ENCODE measurements at regions of chr9 and their contacts with region 1.

Region 1: DNA sequence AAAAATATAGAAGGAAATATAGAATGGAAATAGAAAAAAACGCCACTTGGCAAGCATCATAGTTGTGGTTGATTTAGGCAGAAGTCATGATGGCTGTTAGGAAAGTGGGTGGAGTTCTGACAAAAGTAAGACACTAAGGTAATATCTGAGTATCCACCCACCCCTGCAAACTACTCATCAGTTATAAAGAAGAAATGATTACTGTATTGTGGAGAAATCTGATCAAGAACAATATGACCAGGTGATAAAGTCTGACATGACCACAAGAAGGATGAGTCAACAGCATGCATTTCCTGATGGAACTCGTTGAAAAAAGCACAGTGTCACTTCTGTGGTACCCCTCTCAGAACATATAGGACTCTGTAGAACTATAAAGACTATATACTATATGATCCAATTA is 343.4 kb upstream of the PAPPA start:
- DNase-seq: no peak
- H3K4me3 ChIP-seq: no peak overlapping the region
- H3K27ac ChIP-seq: no peak overlapping the region
- H3K4me1 ChIP-seq: no peaks in the 10 kb centered on the region
- H3K27me3 ChIP-seq: no peaks in the 10 kb centered on the region
- CTCF ChIP-seq: no peak

Region 2: DNA sequence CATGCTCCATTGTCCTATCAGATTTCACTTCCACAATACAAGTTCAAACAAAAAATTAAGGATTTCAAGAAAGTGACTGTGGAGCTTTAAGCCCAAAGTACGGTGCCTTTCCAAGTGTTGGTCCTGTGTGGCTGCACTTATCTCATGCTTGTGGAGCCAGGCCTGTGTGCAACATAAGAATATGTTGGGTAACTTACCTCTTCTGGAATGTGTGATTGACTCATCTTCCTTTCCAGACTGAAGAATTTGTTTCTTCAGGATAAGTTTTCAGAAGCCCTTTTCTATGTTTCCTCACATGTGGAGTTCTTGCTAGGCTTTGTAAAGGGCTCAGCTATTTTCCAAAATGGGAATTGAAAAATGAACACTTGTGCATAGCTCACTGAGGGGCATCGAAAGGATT is 141.7 kb before region 1 on chr9:
- intact Hi-C with region 1: no loop called
- DNase-seq: peak in 1 of 2 donors; percentile 65
- H3K4me3 ChIP-seq: no peak overlapping the region
- H3K27ac ChIP-seq: peak overlapping the region; percentile 53 to 61
- H3K4me1 ChIP-seq: peaks cover 9 to 34% of the 10 kb centered on the region in 2 donors
- H3K27me3 ChIP-seq: no peaks in the 10 kb centered on the region
- CTCF ChIP-seq: no peak

Region 3: DNA sequence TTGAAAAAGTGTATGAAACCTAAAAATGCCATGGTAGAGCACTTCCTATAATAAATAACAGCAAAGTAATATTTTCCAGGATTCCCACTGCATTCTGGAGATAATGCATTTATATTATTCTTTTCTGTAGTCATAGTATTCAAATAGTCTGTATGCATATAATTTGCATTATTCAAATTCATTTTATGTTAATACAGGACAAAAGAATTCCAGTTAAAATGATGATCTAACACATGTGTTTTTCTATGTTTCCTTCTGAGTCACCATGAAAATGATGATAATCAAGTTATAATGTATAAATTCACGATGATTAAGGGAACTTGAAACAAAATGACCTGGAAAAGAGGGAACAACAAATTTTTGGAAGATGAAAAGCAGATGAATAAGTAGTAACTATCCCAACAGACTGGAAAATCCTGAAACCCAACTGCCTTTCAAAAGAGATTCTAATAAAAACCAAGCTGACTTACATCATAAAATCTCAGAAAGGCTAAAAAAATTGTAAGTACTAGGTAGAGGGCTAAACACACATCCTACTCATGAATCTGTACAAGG is 15.2 kb before region 1 on chr9:
- intact Hi-C with region 1: no loop called
- DNase-seq: no peak
- H3K4me3 ChIP-seq: no peak overlapping the region
- H3K27ac ChIP-seq: no peak overlapping the region
- H3K4me1 ChIP-seq: no peaks in the 10 kb centered on the region
- H3K27me3 ChIP-seq: no peaks in the 10 kb centered on the region
- CTCF ChIP-seq: no peak

Region 4: DNA sequence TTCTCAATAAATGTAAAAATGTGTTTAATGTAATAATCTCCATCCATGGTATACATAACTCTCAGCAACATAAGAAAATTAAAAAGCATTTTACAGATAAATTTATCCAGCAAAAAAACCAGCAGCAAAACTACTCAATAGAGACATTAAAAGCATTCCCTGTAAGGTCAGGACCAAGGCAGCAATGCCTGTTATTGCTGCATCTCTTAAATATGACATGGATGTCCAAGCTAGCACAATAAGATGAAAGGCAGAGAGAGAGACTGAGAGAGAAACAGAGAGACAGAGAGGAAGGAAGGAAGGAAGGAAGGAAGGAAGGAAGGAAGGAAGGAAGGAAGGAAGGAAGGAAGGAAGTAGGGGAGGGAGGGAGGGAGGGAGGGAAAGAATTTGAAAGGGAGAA is 54.4 kb after region 1 on chr9:
- intact Hi-C with region 1: no loop called
- DNase-seq: no peak
- H3K4me3 ChIP-seq: no peak overlapping the region
- H3K27ac ChIP-seq: no peak overlapping the region
- H3K4me1 ChIP-seq: no peaks in the 10 kb centered on the region
- H3K27me3 ChIP-seq: no peaks in the 10 kb centered on the region
- CTCF ChIP-seq: no peak

Region 5: DNA sequence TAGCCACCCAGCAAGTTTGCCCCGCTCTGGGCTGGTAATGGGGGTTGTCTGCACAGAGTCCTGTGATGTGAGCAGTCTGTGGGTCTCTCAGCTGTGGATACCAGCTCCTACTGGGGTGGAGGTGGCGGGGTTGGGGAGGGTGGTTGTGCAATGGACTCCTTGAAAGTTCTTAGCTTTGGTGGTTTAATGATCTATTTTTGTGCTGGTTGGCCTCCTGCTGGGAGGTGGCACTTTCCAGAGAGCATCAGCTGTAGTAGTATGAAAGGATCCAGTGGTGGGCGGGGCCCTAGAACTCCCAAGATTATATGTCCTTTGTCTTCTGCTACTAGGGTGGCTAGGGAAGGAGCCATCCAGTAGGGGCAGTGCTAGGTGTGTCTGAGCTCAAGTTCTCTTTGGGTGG is 67.8 kb after region 1 on chr9:
- intact Hi-C with region 1: loop called (anchors 10 kb)
- DNase-seq: no peak
- H3K4me3 ChIP-seq: no peak overlapping the region
- H3K27ac ChIP-seq: no peak overlapping the region
- H3K4me1 ChIP-seq: peaks cover under 1 to 2% of the 10 kb centered on the region in 2 donors
- H3K27me3 ChIP-seq: no peaks in the 10 kb centered on the region
- CTCF ChIP-seq: no peak

Region 6: GRCh38 chr9:116087246-116087645 is 277.1 kb after region 1 on chr9:
- intact Hi-C with region 1: no loop called
- DNase-seq: peak in 1 of 2 donors; percentile 19
- H3K4me3 ChIP-seq: no peak overlapping the region
- H3K27ac ChIP-seq: no peak overlapping the region
- H3K4me1 ChIP-seq: no peaks in the 10 kb centered on the region
- H3K27me3 ChIP-seq: no peaks in the 10 kb centered on the region
- CTCF ChIP-seq: no peak